Activated CD4-positive, alpha-beta memory T cell treated with anti-CD3 and anti-CD28 coated beads, Interleukin-2, amount 10 ng/mL, durations not matched to agents 7 days and 5 days (primary cell): ENCODE measurements at regions of chr19 and their contacts with region 1.

Region 1: GRCh38 chr19:58182989-58183816 is at the start of gene ZNF274:
- DNase-seq: peak; percentile 94
- H3K4me3 Mint-ChIP-seq: peak within 1 kb of the TSS; percentile 89
- H3K27ac Mint-ChIP-seq: peak within 1 kb of the TSS; percentile 99
- H3K4me1 Mint-ChIP-seq: peaks cover 21% of the 10 kb centered on the region
- H3K27me3 Mint-ChIP-seq: no peaks in the 10 kb centered on the region
- total RNA-seq, gene ZNF274: 27.0 to 29.2 TPM

Region 2: GRCh38 chr19:58002384-58003173 is 180.6 kb before region 1 on chr19 and contains the start of gene ZNF606:
- CTCF ChIA-PET with region 1: no interaction called
- POLR2A ChIA-PET with region 1: interaction called, 17 read pairs
- DNase-seq: peak; percentile 85
- H3K4me3 Mint-ChIP-seq: peak within 1 kb of the TSS; percentile 77
- H3K27ac Mint-ChIP-seq: peak within 1 kb of the TSS; percentile 77
- H3K4me1 Mint-ChIP-seq: peaks cover 30% of the 10 kb centered on the region
- H3K27me3 Mint-ChIP-seq: no peaks in the 10 kb centered on the region
- total RNA-seq, gene ZNF606: 9.6 to 9.7 TPM

Region 3: DNA sequence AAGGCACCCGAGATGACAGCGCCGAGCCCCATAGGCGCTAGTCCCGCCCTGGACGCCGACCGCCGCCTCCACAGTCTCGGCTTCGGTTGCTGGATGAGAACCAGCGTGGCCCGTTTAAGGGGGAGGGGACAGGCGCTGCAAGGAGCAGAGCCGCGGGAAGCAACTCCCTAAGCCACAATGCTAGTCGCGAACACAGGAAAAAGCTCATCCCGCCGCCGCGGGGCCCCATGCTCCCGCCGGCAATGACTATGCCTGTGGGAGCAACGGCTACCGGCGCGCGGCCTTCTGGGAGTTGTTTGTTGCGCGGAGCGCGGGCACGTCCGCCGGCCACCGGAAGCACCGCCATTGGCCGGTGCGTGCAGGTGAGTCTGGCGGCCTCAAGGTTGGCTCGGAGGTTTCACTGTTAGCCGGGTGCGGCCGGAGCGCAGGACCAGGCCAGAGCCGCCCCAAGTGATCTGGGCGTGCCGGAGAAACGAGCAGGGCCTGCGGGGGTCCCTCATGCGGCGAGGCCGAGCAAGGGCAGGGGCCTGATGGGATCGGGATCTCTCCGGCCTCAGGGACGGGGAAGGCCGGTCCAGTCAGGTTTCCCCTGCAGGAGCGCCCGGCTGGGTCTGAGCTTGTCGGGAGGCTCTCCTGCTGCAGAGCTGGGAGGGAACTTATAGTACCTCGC is 45.5 kb after region 1 on chr19 and contains the start of gene ZNF544:
- CTCF ChIA-PET with region 1: no interaction called
- POLR2A ChIA-PET with region 1: interaction called, 22 read pairs
- DNase-seq: peak; percentile 69
- H3K4me3 Mint-ChIP-seq: peak within 1 kb of the TSS; percentile 83
- H3K27ac Mint-ChIP-seq: peak within 1 kb of the TSS; percentile 80
- H3K4me1 Mint-ChIP-seq: peaks cover 34% of the 10 kb centered on the region
- H3K27me3 Mint-ChIP-seq: no peaks in the 10 kb centered on the region
- total RNA-seq, gene ZNF544: 47.5 to 50.0 TPM

Region 4: GRCh38 chr19:58252102-58252685 is 69.0 kb after region 1 on chr19:
- CTCF ChIA-PET with region 1: no interaction called
- POLR2A ChIA-PET with region 1: no interaction called
- DNase-seq: no peak
- H3K4me3 Mint-ChIP-seq: no peak overlapping the region
- H3K27ac Mint-ChIP-seq: no peak overlapping the region
- H3K4me1 Mint-ChIP-seq: no peaks in the 10 kb centered on the region
- H3K27me3 Mint-ChIP-seq: no peaks in the 10 kb centered on the region

Region 5: DNA sequence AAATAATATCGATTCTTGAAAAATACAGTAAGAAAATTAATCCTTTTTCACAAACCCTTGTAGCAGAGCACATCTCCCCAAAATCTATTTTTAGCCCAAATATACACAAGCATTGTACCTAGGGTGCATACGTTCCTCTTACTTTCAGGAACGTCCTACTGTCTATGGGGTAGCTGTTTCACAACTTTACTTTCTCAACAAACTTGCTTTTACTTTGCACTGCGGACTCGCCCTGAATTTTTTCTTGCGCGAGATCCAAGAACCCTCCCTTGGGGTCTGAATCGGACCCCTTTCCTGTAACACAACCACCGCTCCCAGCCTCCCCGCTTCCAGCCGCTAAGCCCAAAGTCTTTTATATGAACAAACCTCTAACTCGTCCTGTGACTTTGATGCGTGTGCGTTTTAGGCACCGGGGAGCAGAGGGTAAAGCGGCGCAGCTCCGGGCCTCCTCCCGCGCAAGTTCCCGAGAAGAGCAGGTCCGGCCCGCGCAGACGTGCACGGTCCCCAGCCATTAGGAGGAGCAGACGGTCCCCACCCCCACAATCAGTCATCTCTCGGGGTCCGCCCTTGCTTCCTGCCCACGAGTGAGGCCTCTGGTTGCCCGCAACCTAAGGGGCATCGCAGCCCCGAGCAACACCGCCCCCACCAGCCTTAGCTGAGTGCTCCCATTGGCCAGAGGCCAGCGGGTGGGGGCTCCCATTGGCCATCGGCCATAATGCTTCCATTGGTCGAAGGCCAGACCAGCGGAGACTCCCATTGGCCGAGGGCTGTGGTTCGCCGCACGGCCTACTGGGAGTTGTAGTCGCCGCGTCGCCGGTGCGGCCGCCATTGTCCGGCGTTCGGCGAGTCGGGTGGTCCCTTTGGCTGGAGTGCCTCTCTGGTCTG is 95.2 kb after region 1 on chr19 and contains the start of gene ZNF8:
- CTCF ChIA-PET with region 1: no interaction called
- POLR2A ChIA-PET with region 1: interaction called, 16 read pairs
- DNase-seq: peak; percentile 98
- H3K4me3 Mint-ChIP-seq: peak within 1 kb of the TSS; percentile 87
- H3K27ac Mint-ChIP-seq: peak within 1 kb of the TSS; percentile 80
- H3K4me1 Mint-ChIP-seq: peaks cover 40% of the 10 kb centered on the region
- H3K27me3 Mint-ChIP-seq: no peaks in the 10 kb centered on the region
- total RNA-seq, gene ZNF8: 4.5 TPM

Region 6: GRCh38 chr19:58386576-58387337 is 203.6 kb after region 1 on chr19 and contains the start of gene RPS5:
- CTCF ChIA-PET with region 1: no interaction called
- POLR2A ChIA-PET with region 1: interaction called, 11 read pairs
- DNase-seq: peak; percentile 96
- H3K4me3 Mint-ChIP-seq: peak within 1 kb of the TSS; percentile 95
- H3K27ac Mint-ChIP-seq: peak within 1 kb of the TSS; percentile 96
- H3K4me1 Mint-ChIP-seq: peaks cover 46% of the 10 kb centered on the region
- H3K27me3 Mint-ChIP-seq: no peaks in the 10 kb centered on the region
- total RNA-seq, gene RPS5: 785 to 801 TPM